ENCODE measurements at regions of chr7 and their contacts with region 1.

Region 1: DNA sequence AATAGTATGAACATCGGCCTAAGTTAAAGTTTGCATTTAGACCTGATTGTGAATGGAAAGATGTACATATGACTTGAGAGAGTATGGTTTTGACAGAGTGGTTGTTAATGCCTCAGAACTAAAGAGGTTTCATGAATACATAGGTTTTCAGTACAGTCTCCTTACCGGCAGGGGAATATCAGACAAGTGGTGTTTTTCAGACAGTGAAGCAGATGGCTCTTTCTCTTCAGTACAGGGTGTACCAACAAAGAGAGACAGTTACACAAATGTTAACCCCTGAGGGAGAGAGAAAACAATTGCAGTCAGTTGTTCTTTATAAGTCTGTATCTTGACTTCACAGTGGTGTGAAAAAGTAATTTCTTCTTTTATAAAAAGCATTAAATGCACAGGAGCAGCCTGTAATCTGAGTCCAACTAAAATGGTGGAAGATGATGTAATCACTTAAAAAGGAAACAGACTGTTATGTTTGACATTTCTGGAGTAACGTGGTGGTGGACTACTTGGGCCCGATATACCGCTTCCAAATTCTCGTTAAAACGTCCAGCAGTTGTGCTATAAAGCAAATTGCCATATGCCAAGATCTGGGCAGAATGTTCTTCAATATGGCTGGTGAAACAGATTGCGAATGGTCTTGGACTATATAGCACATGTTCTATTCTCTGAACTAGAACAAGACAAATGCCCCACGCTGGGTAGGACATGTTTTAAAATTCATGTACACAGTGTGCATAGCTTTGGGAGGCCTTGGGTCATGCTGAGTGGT is 69.2 kb downstream of the SDK1 start:
- DNase-seq: no peak
- H3K4me3 ChIP-seq: no peak overlapping the region
- CTCF ChIP-seq: no peak

Region 2: GRCh38 chr7:3408814-3409595 is 38.8 kb after region 1 on chr7:
- in situ Hi-C with region 1: loop called (anchors 5 kb)
- DNase-seq: no peak
- H3K4me3 ChIP-seq: no peak overlapping the region
- CTCF ChIP-seq: no peak